SK-N-SH (cell line): ENCODE measurements at regions of chr7 and their contacts with region 1.

Region 1: DNA sequence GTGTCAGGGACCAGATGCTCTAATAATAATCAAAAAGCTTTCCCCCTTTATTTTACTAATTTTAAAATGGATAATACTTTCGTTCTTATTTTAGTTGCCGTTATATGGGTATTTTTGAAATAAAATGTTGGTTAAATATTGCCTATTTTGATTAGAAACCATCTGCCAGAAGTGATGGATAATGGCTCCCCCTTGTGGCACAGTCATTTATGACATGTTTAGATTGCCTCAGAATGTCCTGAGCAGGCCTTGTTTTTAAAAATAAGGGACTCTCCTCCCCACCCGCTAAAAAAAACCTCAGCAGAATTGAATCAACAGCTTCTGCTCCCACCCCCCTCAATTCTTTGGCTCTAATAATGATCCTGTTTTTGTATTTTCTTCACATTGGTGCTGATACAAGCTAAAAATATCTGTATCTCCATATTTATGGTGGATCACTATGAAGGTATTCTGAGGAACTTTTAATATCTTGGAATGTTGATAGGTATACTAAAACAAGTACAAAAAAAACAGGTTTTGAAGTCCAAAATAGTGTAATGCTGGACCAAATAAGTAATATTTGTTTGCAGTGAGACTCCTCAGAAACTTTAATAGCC is 38.8 kb downstream of the TMEM60 start:
- DNase-seq: peak; percentile 51
- H3K4me3 ChIP-seq: no peak overlapping the region
- H3K27ac ChIP-seq: peak overlapping the region in 1 of 2 experiments; percentile 1; a peak in 1 of 4 replicates
- H3K4me1 ChIP-seq: peaks cover 0 to 4% of the 10 kb centered on the region in 2 experiments; a peak in 1 of 4 replicates
- H3K27me3 ChIP-seq: no peaks in the 10 kb centered on the region
- CTCF ChIP-seq: peak; percentile 98
- EP300 ChIP-seq: no peak
- RAD21 ChIP-seq: peak; percentile 98

Region 2: GRCh38 chr7:77657427-77658224 is 101.8 kb before region 1 on chr7:
- CTCF ChIA-PET with region 1: interaction called, 392 read pairs
- POLR2A ChIA-PET with region 1: no interaction called
- DNase-seq: peak; percentile 64
- H3K4me3 ChIP-seq: no peak overlapping the region
- H3K27ac ChIP-seq: no peak overlapping the region
- H3K4me1 ChIP-seq: no peaks in the 10 kb centered on the region
- H3K27me3 ChIP-seq: no peaks in the 10 kb centered on the region
- CTCF ChIP-seq: peak; percentile 88
- EP300 ChIP-seq: no peak
- RAD21 ChIP-seq: peak; percentile 96

Region 3: GRCh38 chr7:77674878-77675277 is 84.5 kb before region 1 on chr7:
- CTCF ChIA-PET with region 1: interaction called, 25 read pairs
- POLR2A ChIA-PET with region 1: no interaction called
- DNase-seq: no peak
- H3K4me3 ChIP-seq: no peak overlapping the region
- H3K27ac ChIP-seq: no peak overlapping the region
- H3K4me1 ChIP-seq: no peaks in the 10 kb centered on the region
- H3K27me3 ChIP-seq: no peaks in the 10 kb centered on the region
- CTCF ChIP-seq: no peak
- EP300 ChIP-seq: no peak
- RAD21 ChIP-seq: no peak

Region 4: GRCh38 chr7:77696198-77697028 is 63.0 kb before region 1 on chr7 and contains the start of gene RSBN1L:
- CTCF ChIA-PET with region 1: interaction called, 21 read pairs
- POLR2A ChIA-PET with region 1: interaction called, 5 read pairs
- DNase-seq: peak; percentile 99
- H3K4me3 ChIP-seq: peak within 1 kb of the TSS; percentile 75 to 96
- H3K27ac ChIP-seq: peak within 1 kb of the TSS; percentile 85 to 91
- H3K4me1 ChIP-seq: peaks cover 3 to 10% of the 10 kb centered on the region in 2 experiments; a peak in 3 of 4 replicates
- H3K27me3 ChIP-seq: no peaks in the 10 kb centered on the region
- CTCF ChIP-seq: peak; percentile 47
- EP300 ChIP-seq: no peak; a peak in 1 of 4 replicates
- RAD21 ChIP-seq: no peak
- polyA plus RNA-seq, gene RSBN1L: 5.6 and 6.5 TPM in 2 replicates

Region 5: DNA sequence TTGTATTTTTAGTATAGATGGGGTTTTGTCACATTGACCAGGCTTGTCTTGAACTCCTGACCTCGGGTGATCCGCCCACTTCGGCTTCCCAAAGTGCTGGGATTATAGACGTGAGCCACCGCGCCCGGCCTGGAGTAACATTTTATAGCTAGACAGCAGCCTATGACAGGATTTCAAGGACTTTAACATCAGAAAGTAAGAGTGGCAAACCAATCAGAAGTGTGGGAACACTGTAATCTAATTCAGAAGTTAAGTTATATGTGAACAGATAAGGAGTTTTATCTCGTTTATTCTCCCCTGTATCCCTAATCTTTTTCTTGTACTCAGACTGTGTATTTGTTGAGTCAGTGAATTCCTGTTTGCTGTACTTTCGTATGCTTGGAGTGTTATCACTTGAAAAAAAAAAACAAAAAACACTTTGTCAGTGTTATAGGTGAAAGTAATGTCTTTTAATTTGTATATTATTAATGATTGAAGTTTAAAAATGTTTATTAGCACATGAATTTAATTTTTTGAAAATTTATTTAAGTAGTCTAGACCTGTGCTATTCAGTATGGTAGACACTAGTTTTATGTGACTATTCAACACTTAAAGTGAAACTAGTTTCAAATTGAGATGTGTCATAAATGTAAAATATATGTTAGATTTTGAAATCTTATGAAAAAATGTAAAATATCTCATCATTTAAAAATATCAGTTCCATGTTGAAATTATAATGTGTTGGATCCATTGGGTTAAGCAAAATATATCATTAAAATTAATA is 24.6 kb before region 1 on chr7:
- CTCF ChIA-PET with region 1: interaction called, 11 read pairs
- POLR2A ChIA-PET with region 1: no interaction called
- DNase-seq: no peak
- H3K4me3 ChIP-seq: no peak overlapping the region
- H3K27ac ChIP-seq: no peak overlapping the region
- H3K4me1 ChIP-seq: peaks cover 3 to 30% of the 10 kb centered on the region in 2 experiments; a peak in 3 of 4 replicates
- H3K27me3 ChIP-seq: no peaks in the 10 kb centered on the region
- CTCF ChIP-seq: no peak
- EP300 ChIP-seq: no peak
- RAD21 ChIP-seq: no peak

Region 6: GRCh38 chr7:77747178-77747577 is 12.2 kb before region 1 on chr7:
- CTCF ChIA-PET with region 1: interaction called, 28 read pairs
- POLR2A ChIA-PET with region 1: no interaction called
- DNase-seq: no peak
- H3K4me3 ChIP-seq: no peak overlapping the region
- H3K27ac ChIP-seq: no peak overlapping the region
- H3K4me1 ChIP-seq: peaks cover 2 to 5% of the 10 kb centered on the region in 2 experiments; a peak in 2 of 4 replicates
- H3K27me3 ChIP-seq: no peaks in the 10 kb centered on the region
- CTCF ChIP-seq: no peak
- EP300 ChIP-seq: no peak
- RAD21 ChIP-seq: no peak

Region 7: GRCh38 chr7:77888998-77889397 is 129.6 kb after region 1 on chr7:
- CTCF ChIA-PET with region 1: no interaction called
- POLR2A ChIA-PET with region 1: no interaction called
- DNase-seq: no peak
- H3K4me3 ChIP-seq: no peak overlapping the region
- H3K27ac ChIP-seq: no peak overlapping the region
- H3K4me1 ChIP-seq: peaks cover 0 to 4% of the 10 kb centered on the region in 2 experiments; a peak in 2 of 4 replicates
- H3K27me3 ChIP-seq: no peaks in the 10 kb centered on the region
- CTCF ChIP-seq: no peak
- EP300 ChIP-seq: no peak
- RAD21 ChIP-seq: no peak

Region 8: DNA sequence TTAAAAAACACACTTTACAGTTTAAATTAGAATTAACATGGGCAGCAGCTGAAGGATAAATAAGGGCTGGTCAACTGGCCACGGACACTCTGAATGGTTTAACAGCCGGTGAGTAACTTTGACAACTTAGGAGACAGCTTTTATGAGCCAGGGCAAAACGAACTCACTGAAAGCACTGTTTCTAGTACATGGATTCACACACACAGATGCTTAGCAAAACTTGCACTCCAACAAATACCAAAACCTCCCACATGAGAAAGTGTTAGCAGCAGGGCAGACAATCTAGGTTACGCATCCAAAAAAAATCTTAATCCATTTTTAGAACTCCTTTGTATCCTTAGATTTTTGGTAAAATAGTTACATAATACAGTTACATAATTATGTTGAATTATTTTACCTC is 525.6 kb after region 1 on chr7:
- CTCF ChIA-PET with region 1: no interaction called
- POLR2A ChIA-PET with region 1: no interaction called
- DNase-seq: no peak
- H3K4me3 ChIP-seq: no peak overlapping the region
- H3K27ac ChIP-seq: no peak overlapping the region
- H3K4me1 ChIP-seq: peaks cover 0 to 1% of the 10 kb centered on the region in 2 experiments; a peak in 1 of 4 replicates
- H3K27me3 ChIP-seq: no peaks in the 10 kb centered on the region
- CTCF ChIP-seq: no peak
- EP300 ChIP-seq: no peak
- RAD21 ChIP-seq: no peak